H1 (cell line): ENCODE measurements at regions of chr9 and their contacts with region 1.

Region 1: DNA sequence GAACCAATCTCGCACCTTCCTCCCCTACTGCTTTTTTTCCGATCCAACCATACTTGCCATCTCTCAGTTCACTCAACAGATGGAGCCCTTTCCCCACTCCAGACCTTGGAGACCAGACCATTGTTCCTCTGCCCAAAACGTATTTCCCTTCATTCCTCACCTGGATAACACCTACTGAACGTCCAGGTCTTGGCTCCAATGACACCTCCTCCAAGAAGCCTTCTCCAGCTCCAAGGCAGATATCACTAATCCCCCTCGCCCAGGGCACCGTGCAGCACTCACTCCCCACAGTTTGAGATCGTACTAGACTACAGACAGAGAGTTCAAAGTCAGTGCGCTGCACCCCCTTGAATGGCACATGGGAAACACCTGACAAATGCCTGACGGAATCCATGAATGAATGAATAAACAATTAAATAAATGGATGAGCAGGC is 47.1 kb upstream of the AKNA start:
- DNase-seq: peak in 1 of 2 experiments; percentile 31
- H3K4me3 ChIP-seq: no peak overlapping the region
- H3K27ac ChIP-seq: no peak overlapping the region
- H3K4me1 ChIP-seq: peaks cover 0 to 6% (median 0%) of the 10 kb centered on the region in 4 experiments; a peak in 3 of 7 replicates
- H3K27me3 ChIP-seq: no peaks in the 10 kb centered on the region
- CTCF ChIP-seq: peak; percentile 51 to 91 (median 84)
- EP300 ChIP-seq: no peak
- POLR2A ChIP-seq: no peak
- RAD21 ChIP-seq: peak; percentile 96

Region 2: GRCh38 chr9:114413861-114414301 is 21.0 kb before region 1 on chr9:
- CTCF ChIA-PET with region 1: interaction called, 271 read pairs
- POLR2A ChIA-PET with region 1: interaction called, 4 read pairs
- DNase-seq: no peak
- H3K4me3 ChIP-seq: no peak overlapping the region
- H3K27ac ChIP-seq: no peak overlapping the region
- H3K4me1 ChIP-seq: peaks cover 5 to 12% (median 7%) of the 10 kb centered on the region in 4 experiments
- H3K27me3 ChIP-seq: no peaks in the 10 kb centered on the region
- CTCF ChIP-seq: no peak
- EP300 ChIP-seq: no peak
- POLR2A ChIP-seq: no peak
- RAD21 ChIP-seq: no peak

Region 3: DNA sequence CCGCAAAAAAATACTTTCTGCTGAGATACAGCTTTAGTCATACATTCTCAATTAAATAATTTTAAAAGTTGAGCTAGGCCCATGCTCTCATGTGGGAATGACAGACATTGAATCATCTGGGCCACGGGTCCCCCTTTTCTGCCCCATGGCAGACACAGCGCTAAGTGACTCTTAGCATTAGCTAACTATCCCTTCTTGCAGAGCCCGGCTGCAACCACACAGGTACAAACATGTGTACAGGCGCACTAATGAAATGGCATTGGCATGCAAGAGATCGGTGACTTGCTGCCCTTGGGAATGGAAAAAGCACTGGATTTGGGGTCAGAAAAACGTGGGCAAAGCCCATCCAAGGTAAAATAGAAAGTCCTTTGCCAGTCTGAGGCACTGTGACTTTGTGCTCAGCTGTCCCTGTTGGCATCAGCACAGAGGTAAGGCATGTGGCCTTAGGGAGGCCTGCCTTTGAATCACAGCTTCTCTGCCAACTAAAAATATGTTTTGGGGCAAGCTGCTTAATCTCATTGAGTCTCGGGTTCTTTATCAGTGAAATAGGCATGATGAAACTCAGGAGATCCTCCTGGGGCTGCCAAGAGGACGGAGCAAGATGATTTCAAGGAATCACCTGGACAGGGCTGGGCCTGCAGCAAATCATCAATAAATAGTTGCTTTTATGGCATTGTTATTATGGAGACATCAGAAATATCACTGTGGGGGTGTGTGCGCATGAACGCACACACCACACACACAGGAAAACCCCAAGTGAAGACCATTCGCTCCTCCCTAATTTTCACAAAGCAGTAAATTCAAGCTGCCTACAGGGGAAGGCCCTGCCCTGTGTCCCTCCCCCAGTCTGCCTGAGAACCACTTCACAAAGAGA is 16.2 kb after region 1 on chr9:
- CTCF ChIA-PET with region 1: interaction called, 29 read pairs
- POLR2A ChIA-PET with region 1: interaction called, 7 read pairs
- DNase-seq: no peak
- H3K4me3 ChIP-seq: no peak overlapping the region
- H3K27ac ChIP-seq: no peak overlapping the region
- H3K4me1 ChIP-seq: peaks cover 1 to 6% (median 4%) of the 10 kb centered on the region in 4 experiments; a peak in 3 of 7 replicates
- H3K27me3 ChIP-seq: no peaks in the 10 kb centered on the region
- CTCF ChIP-seq: no peak
- EP300 ChIP-seq: no peak
- POLR2A ChIP-seq: no peak
- RAD21 ChIP-seq: no peak

Region 4: GRCh38 chr9:114505187-114506081 is 70.5 kb after region 1 on chr9 and contains the start of gene WHRN:
- CTCF ChIA-PET with region 1: interaction called, 97 read pairs
- POLR2A ChIA-PET with region 1: no interaction called
- DNase-seq: peak; percentile 77 to 94
- H3K4me3 ChIP-seq: peak within 1 kb of the TSS; percentile 62 to 68 (median 66)
- H3K27ac ChIP-seq: no peak within 1 kb of the TSS
- H3K4me1 ChIP-seq: peaks cover 10 to 22% (median 16%) of the 10 kb centered on the region in 4 experiments
- H3K27me3 ChIP-seq: peaks cover 2 to 14% (median 8%) of the 10 kb centered on the region in 4 experiments; a peak in 6 of 7 replicates
- CTCF ChIP-seq: peak in 2 of 3 experiments; percentile 0 to 3; a peak in 2 of 4 replicates
- EP300 ChIP-seq: no peak
- POLR2A ChIP-seq: peak; percentile 45 to 64
- RAD21 ChIP-seq: peak; percentile 1 to 9; a peak in 1 of 4 replicates
- total RNA-seq, gene WHRN: 7.4 and 7.7 TPM in 2 replicates

Region 5: DNA sequence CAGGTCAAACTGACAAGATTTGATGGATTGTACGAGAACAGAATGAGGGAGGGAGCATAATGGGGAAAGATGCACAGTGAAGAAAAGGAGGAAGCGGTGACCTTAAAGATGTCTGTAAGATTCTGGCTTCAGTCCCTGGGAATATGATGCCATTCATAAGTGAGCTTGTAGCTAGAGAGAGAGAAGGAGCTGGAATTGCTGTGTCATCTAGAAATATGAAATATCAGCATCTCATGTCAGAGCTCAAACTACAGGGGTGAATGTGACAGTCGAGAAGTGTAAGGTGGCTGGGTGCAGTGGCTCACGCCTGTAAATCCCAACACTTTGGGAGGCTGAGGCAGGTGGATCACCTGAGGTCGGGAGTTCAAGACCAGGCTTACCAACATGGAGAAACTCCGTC is 94.4 kb after region 1 on chr9:
- CTCF ChIA-PET with region 1: interaction called, 10 read pairs
- POLR2A ChIA-PET with region 1: no interaction called
- DNase-seq: no peak
- H3K4me3 ChIP-seq: no peak overlapping the region
- H3K27ac ChIP-seq: no peak overlapping the region
- H3K4me1 ChIP-seq: no peaks in the 10 kb centered on the region
- H3K27me3 ChIP-seq: no peaks in the 10 kb centered on the region; a peak in 1 of 7 replicates
- CTCF ChIP-seq: no peak
- EP300 ChIP-seq: no peak
- POLR2A ChIP-seq: no peak
- RAD21 ChIP-seq: no peak

Region 6: DNA sequence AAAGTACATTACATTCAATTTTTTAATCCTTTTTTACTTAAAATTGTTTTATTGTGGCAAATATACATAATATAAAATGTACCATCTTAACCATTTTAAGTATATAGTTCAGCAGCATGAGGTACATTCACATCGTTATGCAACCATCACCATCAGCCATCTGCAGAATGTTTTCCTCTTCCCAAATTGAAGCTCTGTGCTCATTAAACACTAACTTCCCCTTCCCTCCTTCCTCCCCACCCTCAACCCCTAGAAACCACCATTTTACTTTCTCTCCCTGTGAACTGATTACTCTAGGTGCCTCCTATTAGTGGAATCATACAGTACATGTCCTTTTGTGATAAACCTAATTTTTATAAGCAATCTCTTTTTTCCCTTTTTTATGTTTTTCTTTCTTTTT is 207.1 kb after region 1 on chr9:
- CTCF ChIA-PET with region 1: interaction called, 14 read pairs
- POLR2A ChIA-PET with region 1: no interaction called
- DNase-seq: no peak
- H3K4me3 ChIP-seq: no peak overlapping the region
- H3K27ac ChIP-seq: no peak overlapping the region
- H3K4me1 ChIP-seq: no peaks in the 10 kb centered on the region
- H3K27me3 ChIP-seq: no peaks in the 10 kb centered on the region
- CTCF ChIP-seq: no peak
- EP300 ChIP-seq: no peak
- POLR2A ChIP-seq: no peak
- RAD21 ChIP-seq: no peak